Activated T-helper 2 cell treated with anti-CD3 and anti-CD28 coated beads, Interferon-gamma antibody, Interleukin-2, Interleukin-4, amounts not matched to agents 10 μg/mL and 5 μg/mL and 100 μg/mL, durations not matched to agents 14 hours and 24 hours and 36 hours (primary cell): ENCODE measurements at regions of chr12 and their contacts with region 1.

Region 1: GRCh38 chr12:104680066-104680465 is 223.3 kb downstream of the CHST11 start:
- DNase-seq: no peak
- H3K4me3 Mint-ChIP-seq: no peak overlapping the region
- H3K27ac Mint-ChIP-seq: peak overlapping the region; percentile 82
- H3K4me1 Mint-ChIP-seq: peaks cover 61% of the 10 kb centered on the region
- H3K27me3 Mint-ChIP-seq: no peaks in the 10 kb centered on the region

Region 2: DNA sequence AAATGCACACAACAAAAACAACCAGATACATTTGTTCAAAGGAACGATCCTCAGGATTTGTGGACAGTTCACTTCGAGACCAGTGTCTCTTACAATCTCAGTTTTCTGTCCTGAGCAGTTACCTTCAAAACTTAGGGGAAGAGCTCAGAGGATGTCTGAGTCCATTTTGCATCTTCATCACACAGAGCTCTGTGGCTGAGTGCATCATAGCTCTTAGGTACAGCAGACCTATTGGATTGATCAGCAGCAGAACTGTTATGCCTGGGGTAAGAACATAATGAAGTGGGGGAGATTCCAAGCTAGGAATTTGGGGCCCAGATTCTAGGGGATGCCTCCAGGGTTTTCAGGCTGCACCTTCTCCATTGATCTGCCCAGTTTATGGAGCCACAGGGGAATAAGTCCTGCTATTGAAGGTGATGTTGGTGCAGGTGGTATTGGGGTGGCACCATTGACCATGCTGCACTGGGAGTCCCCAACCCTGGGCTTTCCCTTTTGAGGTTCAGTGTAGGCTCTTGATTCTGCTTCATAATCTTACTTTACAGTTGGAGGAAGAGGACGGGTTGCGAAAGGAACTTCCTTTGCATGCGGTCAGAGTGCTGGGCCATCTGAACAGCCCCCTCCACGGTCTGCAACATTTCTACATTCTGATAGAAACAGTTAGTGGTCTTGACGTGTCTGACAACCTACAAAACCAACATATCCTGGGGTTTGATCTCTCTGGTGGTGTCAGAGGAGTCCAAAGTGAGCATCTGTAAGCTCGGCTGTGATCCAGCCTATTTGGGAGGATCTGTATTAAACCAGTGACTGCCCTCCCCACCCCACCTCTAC is 110.5 kb before region 1 on chr12:
- intact Hi-C with region 1: loop called (anchors 5 kb)
- DNase-seq: peak; percentile 51
- H3K4me3 Mint-ChIP-seq: peak overlapping the region; percentile 61
- H3K27ac Mint-ChIP-seq: peak overlapping the region; percentile 71
- H3K4me1 Mint-ChIP-seq: peaks cover 54% of the 10 kb centered on the region
- H3K27me3 Mint-ChIP-seq: no peaks in the 10 kb centered on the region

Region 3: GRCh38 chr12:104763168-104763805 is 83.2 kb after region 1 on chr12:
- intact Hi-C with region 1: loop called (anchors 5 kb)
- DNase-seq: no peak
- H3K4me3 Mint-ChIP-seq: peak overlapping the region; percentile 20
- H3K27ac Mint-ChIP-seq: peak overlapping the region; percentile 76
- H3K4me1 Mint-ChIP-seq: peaks cover 22% of the 10 kb centered on the region
- H3K27me3 Mint-ChIP-seq: no peaks in the 10 kb centered on the region

Region 4: DNA sequence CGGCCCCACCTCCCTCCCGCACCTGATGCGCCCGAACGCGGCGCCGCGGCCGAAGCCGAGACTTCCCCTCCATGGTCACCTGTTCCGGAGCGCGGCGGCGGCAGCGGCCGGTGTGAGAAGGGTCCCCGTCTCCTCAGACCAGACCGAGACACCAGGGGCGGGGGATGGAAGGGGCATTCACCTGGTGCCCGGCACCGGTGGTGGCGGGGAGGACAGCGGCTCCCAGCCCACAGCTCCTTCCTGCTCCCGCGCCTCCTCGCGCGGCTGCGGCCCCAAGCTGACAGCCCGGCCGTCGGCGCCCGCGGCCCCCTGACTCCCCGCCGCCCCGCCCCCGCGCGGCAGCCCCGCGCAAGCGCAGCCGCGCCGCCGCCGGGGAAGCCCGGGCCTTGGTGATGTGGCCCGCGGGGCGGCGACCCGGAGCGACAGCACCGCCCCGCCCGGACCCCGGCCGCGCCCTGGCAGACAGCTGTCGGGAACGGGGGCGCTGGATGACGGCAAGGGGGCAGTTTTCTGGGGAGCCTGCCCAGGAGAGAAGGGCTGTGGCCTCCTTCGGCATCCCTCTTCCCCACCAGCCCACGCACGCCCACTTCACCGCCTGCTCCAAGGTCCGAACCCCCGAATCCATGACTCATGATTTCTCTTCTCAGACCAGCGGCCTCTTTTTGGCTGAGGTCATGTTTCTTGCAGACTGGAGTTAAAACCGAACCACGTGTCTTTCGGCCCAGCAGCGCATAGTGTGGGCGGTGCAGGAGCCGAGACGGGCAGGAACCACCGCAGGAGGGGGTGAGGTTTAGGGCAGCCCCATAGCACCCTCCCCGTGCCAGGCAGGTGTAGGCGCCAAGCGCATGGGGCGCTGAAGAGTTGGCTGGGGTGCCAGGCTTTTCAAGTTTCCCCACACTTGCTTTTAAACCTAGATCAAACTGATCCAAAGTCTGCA is 278.2 kb after region 1 on chr12 and contains the start of gene SLC41A2:
- intact Hi-C with region 1: loop called (anchors 5 kb)
- DNase-seq: peak; percentile 65
- H3K4me3 Mint-ChIP-seq: peak within 1 kb of the TSS; percentile 87
- H3K27ac Mint-ChIP-seq: peak within 1 kb of the TSS; percentile 88
- H3K4me1 Mint-ChIP-seq: peaks cover 23% of the 10 kb centered on the region
- H3K27me3 Mint-ChIP-seq: peaks cover 46% of the 10 kb centered on the region
- total RNA-seq, gene SLC41A2: 4.3 and 8.2 TPM in 2 replicates

Region 5: DNA sequence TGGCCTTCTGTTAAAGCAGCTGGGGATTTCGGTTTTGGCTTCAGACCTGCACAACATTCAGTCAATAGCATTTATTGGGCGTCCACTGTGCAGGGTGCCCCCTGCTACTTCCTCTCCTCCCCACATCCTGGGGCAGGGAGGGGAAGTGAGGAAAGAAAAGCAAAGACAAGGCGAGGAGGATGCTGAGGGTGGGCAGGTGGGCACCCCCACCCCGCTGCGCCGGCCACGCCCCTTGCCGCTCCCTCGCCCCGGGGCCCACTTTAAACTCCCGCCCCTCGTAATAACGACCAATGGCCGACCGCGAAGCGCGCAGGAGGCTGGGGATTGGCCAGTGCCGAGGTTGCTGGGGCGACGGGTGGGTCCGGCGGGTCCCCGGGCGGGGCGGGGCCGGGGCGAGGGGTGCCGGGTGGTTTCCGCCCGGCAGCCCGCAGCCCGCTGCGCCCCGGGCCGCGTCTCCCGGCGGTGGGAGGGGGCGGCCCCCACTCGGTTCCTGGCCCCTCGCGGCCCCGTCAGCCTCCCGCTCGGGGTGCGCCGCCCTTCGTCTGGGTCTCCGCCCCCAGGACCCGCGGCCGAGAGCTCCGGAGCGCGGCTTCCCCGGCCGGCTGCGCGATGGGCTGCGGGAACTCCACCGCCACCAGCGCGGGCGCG is 650.3 kb after region 1 on chr12 and contains the start of gene C12orf75:
- intact Hi-C with region 1: loop called (anchors 10 kb)
- DNase-seq: peak; percentile 93
- H3K4me3 Mint-ChIP-seq: peak within 1 kb of the TSS; percentile 89
- H3K27ac Mint-ChIP-seq: peak within 1 kb of the TSS; percentile 97
- H3K4me1 Mint-ChIP-seq: peaks cover 66% of the 10 kb centered on the region
- H3K27me3 Mint-ChIP-seq: no peaks in the 10 kb centered on the region
- total RNA-seq, gene C12orf75: 246 and 252 TPM in 2 replicates